PC-9 (cell line): ENCODE measurements at regions of chr11 and their contacts with region 1.

Region 1: GRCh38 chr11:19101796-19102520 is 15.0 kb upstream of the ZDHHC13 start:
- DNase-seq: peak in 1 of 2 experiments; percentile 97
- H3K4me3 ChIP-seq: peak overlapping the region; percentile 31; the same call in 1 of the 2 replicates
- H3K27ac ChIP-seq: peak overlapping the region; percentile 43
- H3K4me1 ChIP-seq: peaks cover 36% of the 10 kb centered on the region
- H3K27me3 ChIP-seq: no peaks in the 10 kb centered on the region
- CTCF ChIP-seq: no peak

Region 2: DNA sequence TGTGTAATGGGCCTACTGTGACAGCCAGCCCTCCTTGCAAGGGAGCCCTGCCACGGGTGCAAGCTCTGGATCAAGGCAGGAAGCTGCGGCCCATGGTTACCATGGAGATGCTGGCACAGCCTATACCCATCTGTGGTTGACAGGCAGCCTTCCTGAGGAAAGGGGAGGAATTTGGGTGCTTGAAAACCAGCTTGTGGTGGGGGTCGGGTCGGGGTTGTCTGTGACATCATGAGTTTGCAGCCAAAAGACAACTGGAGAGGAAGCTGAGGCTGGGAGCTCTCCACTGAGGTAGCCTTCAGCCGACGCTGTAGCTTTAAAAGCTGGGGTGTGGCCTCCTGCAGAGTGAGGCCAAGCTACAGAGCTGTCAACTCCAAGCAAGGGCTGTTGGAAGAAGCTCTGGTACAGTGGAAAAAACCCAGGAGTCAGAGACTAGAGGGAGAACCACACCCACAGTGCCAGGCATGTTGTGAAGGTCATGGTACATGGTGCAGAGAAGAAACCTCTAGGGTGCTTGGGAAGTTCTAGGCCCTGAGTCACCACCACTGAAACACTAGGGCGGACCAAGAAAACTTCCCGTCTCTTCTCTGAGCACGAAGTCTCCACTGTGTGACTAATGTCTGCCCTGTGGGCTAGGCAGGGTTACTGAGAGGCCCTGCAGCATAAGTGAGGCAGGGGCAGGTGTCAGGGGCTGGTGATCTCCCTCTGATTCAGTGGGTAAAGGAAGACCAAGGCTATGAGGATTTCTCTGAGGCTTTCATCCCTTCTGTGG is 718.4 kb before region 1 on chr11:
- CTCF ChIA-PET with region 1: no interaction called
- POLR2A ChIA-PET with region 1: no interaction called
- intact Hi-C with region 1: no loop called
- DNase-seq: peak; percentile 88 to 100
- H3K4me3 ChIP-seq: peak overlapping the region; percentile 30; the same call in 1 of the 2 replicates
- H3K27ac ChIP-seq: peak overlapping the region; percentile 97
- H3K4me1 ChIP-seq: peaks cover 45% of the 10 kb centered on the region
- H3K27me3 ChIP-seq: no peaks in the 10 kb centered on the region
- CTCF ChIP-seq: no peak

Region 3: GRCh38 chr11:19079643-19080440 is 22.1 kb before region 1 on chr11:
- CTCF ChIA-PET with region 1: no interaction called
- POLR2A ChIA-PET with region 1: interaction called, 11 read pairs
- intact Hi-C with region 1: loop called (anchors 2 kb)
- DNase-seq: peak; percentile 86 to 100
- H3K4me3 ChIP-seq: peak overlapping the region; percentile 41
- H3K27ac ChIP-seq: peak overlapping the region; percentile 100
- H3K4me1 ChIP-seq: peaks cover 53% of the 10 kb centered on the region
- H3K27me3 ChIP-seq: no peaks in the 10 kb centered on the region
- CTCF ChIP-seq: 0 out of 2 replicates have a peak, but pooled peaks have one; percentile 27

Region 4: GRCh38 chr11:19087658-19088057 is 14.3 kb before region 1 on chr11:
- CTCF ChIA-PET with region 1: no interaction called
- POLR2A ChIA-PET with region 1: no interaction called
- intact Hi-C with region 1: loop called (anchors 2 kb)
- DNase-seq: peak; percentile 52 to 98
- H3K4me3 ChIP-seq: no peak overlapping the region
- H3K27ac ChIP-seq: peak overlapping the region; percentile 95
- H3K4me1 ChIP-seq: peaks cover 58% of the 10 kb centered on the region
- H3K27me3 ChIP-seq: no peaks in the 10 kb centered on the region
- CTCF ChIP-seq: no peak

Region 5: DNA sequence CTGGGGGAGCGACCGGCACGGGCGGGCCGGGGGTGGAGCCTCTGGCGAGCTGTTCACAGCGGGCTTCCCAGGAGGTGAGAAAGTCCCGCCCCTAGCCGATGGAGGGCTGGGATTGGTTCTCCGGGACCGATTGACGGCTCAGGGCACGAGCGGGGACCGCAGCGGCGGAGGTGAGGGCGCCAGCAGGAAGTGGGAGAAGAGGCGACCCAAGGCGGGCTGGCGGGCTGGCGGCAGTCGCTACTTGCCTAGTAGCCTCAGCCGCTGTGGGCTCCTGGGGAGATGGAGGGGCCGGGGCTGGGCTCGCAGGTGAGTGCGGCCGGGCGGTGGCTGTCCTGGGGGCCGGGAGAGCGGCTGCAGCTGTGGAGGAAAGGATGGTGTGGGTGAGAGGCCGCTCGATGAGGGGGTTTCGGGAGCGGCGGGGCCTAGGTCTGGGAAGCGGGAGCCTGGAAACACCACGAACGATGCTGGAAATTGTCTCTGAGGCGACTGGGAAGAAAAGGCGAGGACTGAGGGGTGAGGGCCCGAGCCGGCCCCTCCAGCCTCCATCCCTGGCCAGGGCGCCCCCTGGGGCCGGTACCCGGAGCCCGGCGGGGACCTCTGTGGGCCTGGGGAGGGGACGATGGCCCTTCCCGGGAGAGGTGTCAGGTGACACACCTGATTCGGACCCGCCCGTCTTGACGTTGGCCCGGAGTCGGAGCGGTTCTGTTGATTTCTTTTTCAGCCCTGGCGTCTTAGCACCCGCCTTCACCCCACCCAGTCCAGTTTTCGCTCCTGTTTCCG is 15.2 kb after region 1 on chr11 and contains the start of gene ZDHHC13:
- CTCF ChIA-PET with region 1: interaction called, 6 read pairs
- POLR2A ChIA-PET with region 1: no interaction called
- intact Hi-C with region 1: loop called (anchors 1 kb)
- DNase-seq: peak; percentile 91 to 99
- H3K4me3 ChIP-seq: peak within 1 kb of the TSS; percentile 87
- H3K27ac ChIP-seq: peak within 1 kb of the TSS; percentile 86
- H3K4me1 ChIP-seq: peaks cover 37% of the 10 kb centered on the region
- H3K27me3 ChIP-seq: no peaks in the 10 kb centered on the region
- CTCF ChIP-seq: peak; percentile 67; the same call in 1 of the 2 replicates
- total RNA-seq, gene ZDHHC13: 31.5 and 35.5 TPM in 2 replicates